ENCODE measurements at regions of chr19 and their contacts with region 1.

Region 1: GRCh38 chr19:36489118-36489919 is at the start of gene ZNF566:
- DNase-seq: peak; percentile 88
- H3K4me3 Mint-ChIP-seq: peak within 1 kb of the TSS; percentile 96
- H3K27ac Mint-ChIP-seq: peak within 1 kb of the TSS; percentile 97
- H3K4me1 Mint-ChIP-seq: peaks cover 18% of the 10 kb centered on the region
- H3K27me3 Mint-ChIP-seq: no peaks in the 10 kb centered on the region
- total RNA-seq, gene ZNF566: 6.9 and 8.7 TPM in 2 replicates

Region 2: DNA sequence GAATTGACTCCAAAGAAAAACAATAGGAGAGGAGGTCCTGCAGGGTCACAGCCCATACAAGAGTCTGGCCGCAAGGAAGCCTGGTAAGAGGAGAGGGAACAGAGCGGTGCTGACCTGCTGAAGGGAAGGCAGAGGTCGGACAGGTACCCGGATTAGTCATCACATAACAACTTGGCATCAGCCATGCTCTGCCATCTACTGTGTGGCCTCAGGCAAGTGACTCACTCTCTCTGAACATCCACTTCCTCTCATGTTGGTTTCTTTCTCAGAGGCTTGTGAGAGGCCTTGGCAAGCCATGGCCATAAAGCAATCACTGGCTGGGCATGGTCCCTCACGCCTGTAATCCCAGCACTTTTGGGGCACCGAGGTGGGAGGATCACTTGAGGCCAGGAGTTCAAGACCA is 356.8 kb before region 1 on chr19:
- intact Hi-C with region 1: loop called (anchors 2 kb)
- DNase-seq: peak; percentile 17
- H3K4me3 Mint-ChIP-seq: peak overlapping the region; percentile 7
- H3K27ac Mint-ChIP-seq: peak overlapping the region; percentile 78
- H3K4me1 Mint-ChIP-seq: peaks cover 30% of the 10 kb centered on the region
- H3K27me3 Mint-ChIP-seq: peaks cover 1% of the 10 kb centered on the region

Region 3: DNA sequence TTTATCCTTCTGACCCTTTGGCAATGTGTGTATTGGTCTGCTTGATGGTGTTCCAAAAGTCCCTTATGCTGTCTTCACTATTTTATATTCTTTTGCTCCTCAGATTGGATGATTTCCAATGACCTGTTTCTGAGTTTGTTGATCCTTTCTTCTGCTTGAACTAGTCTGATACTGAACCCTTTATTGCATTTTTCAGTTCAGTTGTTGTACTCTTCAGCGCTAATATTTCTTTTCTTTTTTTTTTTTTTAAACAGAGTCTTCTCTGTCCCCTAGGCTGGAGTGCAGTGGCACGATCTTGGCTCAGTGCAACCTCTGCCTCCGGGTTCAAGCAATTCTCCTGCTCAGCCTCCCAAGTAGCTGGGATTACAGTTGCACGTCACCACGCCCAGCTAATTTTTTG is 12.7 kb after region 1 on chr19:
- intact Hi-C with region 1: no loop called
- DNase-seq: no peak
- H3K4me3 Mint-ChIP-seq: no peak overlapping the region
- H3K27ac Mint-ChIP-seq: no peak overlapping the region
- H3K4me1 Mint-ChIP-seq: no peaks in the 10 kb centered on the region
- H3K27me3 Mint-ChIP-seq: no peaks in the 10 kb centered on the region

Region 4: DNA sequence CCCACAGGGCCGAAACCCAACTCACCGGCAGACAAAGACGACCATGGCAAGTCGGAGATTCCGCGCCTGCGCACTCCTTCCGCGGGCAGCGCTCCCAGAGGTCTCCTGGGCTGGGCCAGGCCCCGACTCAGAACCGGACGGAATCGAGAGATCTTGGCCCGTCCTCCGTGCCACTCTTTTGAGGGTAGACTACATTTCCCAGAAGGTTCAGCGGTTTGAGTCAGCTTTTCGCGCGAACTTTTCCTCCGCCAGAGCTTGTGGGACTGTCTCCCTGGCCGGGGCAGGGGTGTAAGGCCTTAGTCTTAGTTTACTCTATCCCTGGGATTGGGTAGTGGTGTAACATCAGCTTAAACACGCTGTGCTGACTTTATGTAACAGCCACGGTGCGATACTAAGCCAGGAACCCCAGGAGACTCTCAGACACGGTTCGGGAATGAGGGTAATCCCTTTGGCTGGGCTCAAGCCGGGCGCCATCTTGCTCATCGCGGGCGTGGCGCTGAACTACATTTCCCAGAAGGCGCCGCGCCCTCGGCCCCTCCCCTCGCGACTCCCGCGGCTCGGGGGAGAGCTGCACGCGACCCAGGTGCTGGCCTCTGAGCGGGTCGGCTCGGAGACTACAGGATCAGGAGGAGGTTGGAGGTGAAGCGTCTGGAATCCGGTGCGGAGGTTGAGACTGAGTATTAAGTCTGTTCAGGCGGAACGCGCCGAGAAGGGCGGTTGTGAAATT is 39.0 kb after region 1 on chr19 and contains the start of gene ZNF260:
- intact Hi-C with region 1: loop called (anchors 1 kb)
- DNase-seq: peak; percentile 89
- H3K4me3 Mint-ChIP-seq: peak within 1 kb of the TSS; percentile 95
- H3K27ac Mint-ChIP-seq: peak within 1 kb of the TSS; percentile 93
- H3K4me1 Mint-ChIP-seq: peaks cover 22% of the 10 kb centered on the region
- H3K27me3 Mint-ChIP-seq: peaks cover 1% of the 10 kb centered on the region
- total RNA-seq, gene ZNF260: 7.5 and 8.9 TPM in 2 replicates

Region 5: DNA sequence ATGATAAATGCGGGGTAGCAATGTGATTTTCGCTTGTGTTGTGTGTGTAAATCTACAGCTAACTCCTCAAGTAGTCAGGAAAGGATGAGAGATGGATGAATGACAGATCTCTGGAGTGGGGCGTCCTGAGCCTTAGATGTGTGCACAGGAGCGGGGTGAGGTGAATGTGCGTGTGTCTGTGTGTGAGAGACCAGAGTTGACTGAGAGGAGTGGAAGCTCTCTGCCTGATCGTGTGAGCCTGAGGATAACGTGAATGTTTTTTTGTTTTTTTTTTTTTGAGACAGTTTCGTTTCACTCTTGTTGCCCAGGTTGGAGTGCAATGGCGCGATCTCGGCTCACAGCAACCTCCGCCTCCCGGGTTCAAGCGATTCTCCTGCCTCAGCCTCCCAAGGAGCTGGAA is 176.5 kb after region 1 on chr19:
- intact Hi-C with region 1: loop called (anchors 1 kb)
- DNase-seq: no peak
- H3K4me3 Mint-ChIP-seq: peak overlapping the region; percentile 99
- H3K27ac Mint-ChIP-seq: peak overlapping the region; percentile 26
- H3K4me1 Mint-ChIP-seq: peaks cover 16% of the 10 kb centered on the region
- H3K27me3 Mint-ChIP-seq: no peaks in the 10 kb centered on the region

Region 6: GRCh38 chr19:37077934-37078725 is 588.8 kb after region 1 on chr19 and contains the start of gene ZNF420:
- intact Hi-C with region 1: loop called (anchors 1 kb)
- DNase-seq: peak; percentile 85
- H3K4me3 Mint-ChIP-seq: peak within 1 kb of the TSS; percentile 93
- H3K27ac Mint-ChIP-seq: peak within 1 kb of the TSS; percentile 90
- H3K4me1 Mint-ChIP-seq: peaks cover 21% of the 10 kb centered on the region
- H3K27me3 Mint-ChIP-seq: no peaks in the 10 kb centered on the region
- total RNA-seq, gene ZNF420: 5.9 and 9.1 TPM in 2 replicates

Region 7: DNA sequence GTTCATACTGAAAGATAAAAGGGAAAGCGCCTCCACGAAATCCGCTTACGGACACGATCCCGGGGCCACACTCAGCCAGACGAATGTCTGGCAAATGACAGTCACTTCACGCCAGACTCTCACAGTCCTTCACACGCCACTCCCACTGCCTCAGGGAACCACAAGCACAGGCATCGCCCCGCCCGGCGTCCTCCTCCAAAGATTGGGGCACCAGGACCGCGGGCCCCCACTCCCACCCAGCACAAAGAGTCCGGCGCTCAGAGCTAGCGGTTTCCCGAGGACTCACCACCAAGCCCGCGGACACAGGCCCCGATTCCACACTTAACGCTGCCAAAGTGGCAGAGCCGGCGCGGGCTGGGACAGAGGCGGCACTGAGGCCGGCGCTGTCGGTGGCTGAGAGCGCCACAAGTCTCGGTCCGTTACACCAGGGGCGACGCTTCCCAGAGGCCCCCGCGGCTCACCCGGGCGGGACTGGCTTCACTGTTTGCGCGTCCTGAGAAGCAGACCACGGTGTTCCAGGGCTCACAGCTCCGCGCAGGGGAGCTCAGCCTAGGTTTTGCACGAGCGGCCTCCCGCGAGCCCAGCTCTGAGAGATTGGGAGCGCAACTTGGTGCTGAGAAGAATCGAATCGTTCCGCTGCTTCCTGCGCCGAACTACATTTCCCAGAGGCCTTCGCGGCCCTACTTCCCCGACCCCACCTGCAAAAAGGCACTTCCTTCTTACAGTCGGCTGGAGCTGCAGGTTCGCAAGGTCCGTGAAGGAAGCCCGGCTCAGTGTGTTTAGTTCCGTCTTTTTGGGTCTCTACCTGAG is 977.7 kb after region 1 on chr19 and contains the start of gene ZNF569:
- intact Hi-C with region 1: loop called (anchors 5 kb)
- DNase-seq: peak; percentile 85
- H3K4me3 Mint-ChIP-seq: peak within 1 kb of the TSS; percentile 92
- H3K27ac Mint-ChIP-seq: peak within 1 kb of the TSS; percentile 93
- H3K4me1 Mint-ChIP-seq: peaks cover 27% of the 10 kb centered on the region
- H3K27me3 Mint-ChIP-seq: no peaks in the 10 kb centered on the region
- total RNA-seq, gene ZNF569: 2.7 and 3.7 TPM in 2 replicates